Sciatic nerve (tissue), 2 donors: ENCODE measurements at regions of chr2 and their contacts with region 1.

Region 1: GRCh38 chr2:220764171-220764570 is 807.9 kb downstream of the EPHA4 start:
- DNase-seq: no peak
- ATAC-seq: no peak

Region 2: DNA sequence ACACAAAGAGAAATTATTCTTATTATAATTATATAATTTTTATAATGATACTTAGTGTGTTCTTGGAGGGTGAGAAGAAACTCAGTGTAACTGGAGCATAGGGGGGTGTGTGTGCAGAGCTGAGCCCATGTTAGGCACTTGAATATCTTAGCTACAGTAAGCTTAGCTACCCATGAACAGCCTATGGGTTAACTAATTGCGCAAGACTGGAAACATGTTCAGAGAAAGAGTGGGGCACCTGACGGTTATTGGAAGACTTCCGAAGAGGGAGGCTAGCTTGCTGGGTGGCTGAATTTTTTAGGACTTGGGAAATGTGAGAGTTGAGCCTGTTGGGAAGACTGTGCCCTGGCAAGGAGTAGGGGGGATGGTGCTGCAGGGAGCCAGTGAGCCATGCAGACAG is 907.6 kb before region 1 on chr2:
- intact Hi-C with region 1: loop called (anchors 5 kb)
- DNase-seq: no peak
- ATAC-seq: peak; percentile 48

Region 3: DNA sequence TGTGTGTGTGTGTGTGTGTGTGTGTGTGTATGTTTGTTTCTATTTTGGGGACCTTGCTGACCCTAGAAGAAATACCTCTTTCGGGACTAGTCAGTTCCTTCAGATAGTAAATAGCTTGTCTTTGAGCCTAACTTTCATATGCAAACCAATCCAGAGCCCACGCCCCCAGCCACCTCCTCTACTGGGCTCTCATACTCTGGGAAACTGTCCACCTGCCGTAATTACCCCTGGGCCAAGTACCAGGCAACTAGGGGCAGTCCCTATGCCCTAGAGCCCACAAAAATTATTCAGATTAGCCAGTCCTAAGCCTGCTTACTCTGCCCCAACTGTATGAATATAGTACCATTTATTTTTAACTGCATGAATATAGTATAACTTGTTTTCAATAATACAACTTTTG is 162.5 kb before region 1 on chr2:
- intact Hi-C with region 1: no loop called
- DNase-seq: no peak
- ATAC-seq: no peak